Activated CD4-positive, alpha-beta T cell treated with anti-CD3 and anti-CD28 coated beads for 36 hours (primary cell): ENCODE measurements at regions of chr9 and their contacts with region 1.

Region 1: GRCh38 chr9:128947422-128948301 is at the starts of genes DOLK and NUP188:
- DNase-seq: peak; percentile 99
- ATAC-seq: peak; percentile 80
- H3K4me3 Mint-ChIP-seq: peak within 1 kb of the TSS; percentile 89
- H3K27ac Mint-ChIP-seq: peak within 1 kb of the TSS; percentile 95
- H3K4me1 Mint-ChIP-seq: peaks cover 29% of the 10 kb centered on the region
- H3K27me3 Mint-ChIP-seq: no peaks in the 10 kb centered on the region
- total RNA-seq, gene DOLK: 4.8 to 5.0 TPM
- total RNA-seq, gene NUP188: 102 to 124 TPM

Region 2: GRCh38 chr9:128249908-128250838 is 697.5 kb before region 1 on chr9:
- CTCF ChIA-PET with region 1: no interaction called
- POLR2A ChIA-PET with region 1: no interaction called
- intact Hi-C with region 1: loop called in 1 of 2 experiments (anchors 1 kb)
- DNase-seq: peak; percentile 99
- ATAC-seq: peak; percentile 98
- H3K4me3 Mint-ChIP-seq: peak overlapping the region; percentile 78
- H3K27ac Mint-ChIP-seq: peak overlapping the region; percentile 42
- H3K4me1 Mint-ChIP-seq: peaks cover 7% of the 10 kb centered on the region
- H3K27me3 Mint-ChIP-seq: peaks cover 10% of the 10 kb centered on the region

Region 3: DNA sequence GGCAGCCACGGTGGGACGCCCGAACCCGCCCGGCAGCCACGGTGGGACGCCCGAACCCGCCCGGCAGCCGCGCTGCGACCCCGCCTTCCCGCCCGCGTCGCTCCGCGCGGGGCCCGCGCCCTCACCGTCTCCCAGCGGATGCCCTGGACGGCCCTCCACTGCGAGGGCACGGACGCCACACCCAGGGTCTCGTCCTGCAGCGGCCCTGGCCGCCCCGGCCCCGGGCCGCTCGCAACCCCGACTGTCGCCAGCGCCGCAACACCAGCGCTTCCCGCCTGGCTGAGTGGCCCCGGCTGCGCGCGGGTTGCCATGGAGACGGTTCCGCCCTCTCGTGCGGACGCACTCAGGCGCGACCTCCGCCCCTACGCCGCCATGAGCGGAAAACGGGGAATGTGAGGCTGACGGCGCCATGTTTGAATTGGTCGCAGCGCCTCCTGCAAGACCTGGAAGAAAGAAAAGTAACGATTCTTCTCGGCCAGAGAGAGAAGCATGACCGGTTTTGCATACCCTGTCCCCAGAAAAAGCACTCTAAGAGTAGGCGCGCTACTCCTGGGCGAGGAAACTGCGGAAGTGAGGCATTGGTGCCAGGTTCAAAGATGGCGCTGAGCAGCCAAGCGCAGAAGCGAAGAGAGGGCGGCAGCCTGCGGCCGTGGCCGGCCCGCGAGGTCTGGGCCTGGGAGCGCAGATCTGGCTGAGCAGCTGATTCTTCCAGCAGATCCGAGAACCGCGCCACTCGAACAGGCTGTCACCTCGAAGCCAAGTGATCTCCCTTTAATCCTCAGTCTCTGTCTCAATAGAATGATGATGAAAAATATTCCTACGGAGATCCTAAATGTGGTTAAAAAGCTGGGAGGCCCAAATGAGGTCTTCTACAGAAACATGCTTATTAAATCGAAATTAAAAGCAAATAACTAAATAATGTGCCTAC is 291.0 kb before region 1 on chr9 and contains the start of gene DYNC2I2:
- CTCF ChIA-PET with region 1: no interaction called
- POLR2A ChIA-PET with region 1: no interaction called
- intact Hi-C with region 1: loop called in 1 of 2 experiments (anchors 1 kb)
- DNase-seq: peak; percentile 99
- ATAC-seq: peak; percentile 98
- H3K4me3 Mint-ChIP-seq: peak within 1 kb of the TSS; percentile 82
- H3K27ac Mint-ChIP-seq: peak within 1 kb of the TSS; percentile 100
- H3K4me1 Mint-ChIP-seq: peaks cover 6% of the 10 kb centered on the region
- H3K27me3 Mint-ChIP-seq: no peaks in the 10 kb centered on the region
- total RNA-seq, gene DYNC2I2: 26.7 to 35.7 TPM

Region 4: GRCh38 chr9:128771745-128772519 is 175.7 kb before region 1 on chr9 and contains the start of gene ZER1:
- CTCF ChIA-PET with region 1: no interaction called
- POLR2A ChIA-PET with region 1: no interaction called
- intact Hi-C with region 1: loop called in 1 of 2 experiments (anchors 1 kb)
- DNase-seq: peak; percentile 97
- ATAC-seq: peak; percentile 94
- H3K4me3 Mint-ChIP-seq: peak within 1 kb of the TSS; percentile 82
- H3K27ac Mint-ChIP-seq: peak within 1 kb of the TSS; percentile 86
- H3K4me1 Mint-ChIP-seq: peaks cover 18% of the 10 kb centered on the region
- H3K27me3 Mint-ChIP-seq: no peaks in the 10 kb centered on the region
- total RNA-seq, gene ZER1: 17.1 to 19.3 TPM

Region 5: DNA sequence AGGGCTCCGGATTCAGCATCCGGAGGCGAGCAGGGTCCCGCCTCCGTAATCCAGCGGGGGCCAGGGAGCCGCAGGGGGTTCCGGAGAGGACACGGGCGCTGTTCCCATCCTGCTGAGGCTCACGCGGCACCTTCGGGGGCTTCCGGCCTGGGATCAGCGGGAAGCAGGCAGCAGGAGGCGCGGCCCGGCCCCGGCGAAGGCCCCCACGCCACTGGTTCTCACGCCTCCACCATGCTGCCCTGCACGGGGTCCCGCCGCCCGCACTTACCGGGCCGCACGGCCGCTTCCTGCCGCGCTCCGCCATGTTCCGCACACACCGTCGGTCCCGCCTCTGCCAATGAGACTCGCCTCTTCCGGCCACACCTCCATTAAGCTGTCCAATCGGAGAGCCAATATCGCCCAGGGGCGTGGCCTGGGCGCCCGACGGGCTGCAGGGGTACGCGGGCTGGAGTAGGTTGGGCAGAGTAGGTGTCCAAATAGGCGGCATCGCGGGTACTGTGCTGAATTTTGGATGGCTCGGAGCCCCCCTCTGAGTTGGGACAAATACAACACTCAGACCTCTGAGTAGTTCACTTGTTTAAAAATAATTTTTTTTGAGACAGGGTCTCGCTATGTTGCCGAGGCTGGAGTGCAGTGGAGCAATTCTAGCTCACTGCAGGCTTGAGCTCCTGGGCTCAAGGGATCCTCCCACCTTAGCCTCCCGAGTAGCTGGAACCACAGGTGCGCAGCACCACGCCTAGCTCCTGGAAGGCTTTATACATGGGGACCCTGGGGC is 118.0 kb before region 1 on chr9 and contains the start of gene SPOUT1:
- CTCF ChIA-PET with region 1: no interaction called
- POLR2A ChIA-PET with region 1: no interaction called
- intact Hi-C with region 1: loop called in 1 of 2 experiments (anchors 1 kb)
- DNase-seq: peak; percentile 96
- ATAC-seq: peak; percentile 98
- H3K4me3 Mint-ChIP-seq: peak within 1 kb of the TSS; percentile 91
- H3K27ac Mint-ChIP-seq: peak within 1 kb of the TSS; percentile 88
- H3K4me1 Mint-ChIP-seq: peaks cover 23% of the 10 kb centered on the region
- H3K27me3 Mint-ChIP-seq: no peaks in the 10 kb centered on the region
- total RNA-seq, gene SPOUT1: 87.9 to 92.9 TPM

Region 6: GRCh38 chr9:129028192-129028957 is 80.7 kb after region 1 on chr9 and contains the start of gene SH3GLB2:
- CTCF ChIA-PET with region 1: no interaction called
- POLR2A ChIA-PET with region 1: no interaction called
- intact Hi-C with region 1: loop called in 1 of 2 experiments (anchors 1 kb)
- DNase-seq: peak; percentile 98
- ATAC-seq: peak; percentile 93
- H3K4me3 Mint-ChIP-seq: peak within 1 kb of the TSS; percentile 81
- H3K27ac Mint-ChIP-seq: peak within 1 kb of the TSS; percentile 52
- H3K4me1 Mint-ChIP-seq: peaks cover 17% of the 10 kb centered on the region
- H3K27me3 Mint-ChIP-seq: no peaks in the 10 kb centered on the region
- total RNA-seq, gene SH3GLB2: 49.1 to 53.7 TPM